Endothelial cell of umbilical vein (primary cell): ENCODE measurements at regions of chr2 and their contacts with region 1.

Region 1: GRCh38 chr2:33433279-33434235 is 42.9 kb upstream of the RASGRP3 start:
- DNase-seq: peak; percentile 70
- H3K4me3 ChIP-seq: no peak overlapping the region
- H3K27ac ChIP-seq: no peak overlapping the region
- H3K4me1 ChIP-seq: peaks cover 19% of the 10 kb centered on the region
- H3K27me3 ChIP-seq: peaks cover 0 to 4% of the 10 kb centered on the region in 2 experiments
- CTCF ChIP-seq: no peak
- POLR2A ChIP-seq: no peak

Region 2: DNA sequence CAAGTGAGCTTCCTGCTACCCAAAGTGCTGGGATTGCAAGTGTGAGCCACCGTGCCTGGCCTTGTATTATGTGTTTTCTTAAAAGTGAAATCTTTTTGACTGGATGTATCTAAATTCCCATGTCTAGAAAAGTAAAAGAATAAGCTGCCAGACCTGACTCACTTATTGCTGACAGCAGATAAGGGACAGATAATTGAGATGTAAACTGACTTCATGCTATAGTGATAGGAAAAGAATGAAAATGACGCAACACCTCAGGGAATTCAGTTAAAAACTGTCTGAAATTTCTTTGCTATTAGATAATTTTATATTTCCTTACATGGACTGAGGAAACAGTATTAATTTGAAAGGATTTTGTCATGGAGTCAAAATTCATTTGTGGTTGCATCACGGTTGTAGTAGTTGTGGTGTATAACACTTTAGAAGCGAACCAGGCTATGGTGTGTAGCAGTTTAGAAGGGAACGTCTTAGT is 786.3 kb before region 1 on chr2:
- CTCF ChIA-PET with region 1: no interaction called
- POLR2A ChIA-PET with region 1: no interaction called
- dilution Hi-C with region 1: no loop called
- intact Hi-C with region 1: no loop called
- DNase-seq: no peak
- H3K4me3 ChIP-seq: no peak overlapping the region
- H3K27ac ChIP-seq: no peak overlapping the region
- H3K4me1 ChIP-seq: no peaks in the 10 kb centered on the region
- H3K27me3 ChIP-seq: no peaks in the 10 kb centered on the region
- CTCF ChIP-seq: no peak
- POLR2A ChIP-seq: no peak

Region 3: DNA sequence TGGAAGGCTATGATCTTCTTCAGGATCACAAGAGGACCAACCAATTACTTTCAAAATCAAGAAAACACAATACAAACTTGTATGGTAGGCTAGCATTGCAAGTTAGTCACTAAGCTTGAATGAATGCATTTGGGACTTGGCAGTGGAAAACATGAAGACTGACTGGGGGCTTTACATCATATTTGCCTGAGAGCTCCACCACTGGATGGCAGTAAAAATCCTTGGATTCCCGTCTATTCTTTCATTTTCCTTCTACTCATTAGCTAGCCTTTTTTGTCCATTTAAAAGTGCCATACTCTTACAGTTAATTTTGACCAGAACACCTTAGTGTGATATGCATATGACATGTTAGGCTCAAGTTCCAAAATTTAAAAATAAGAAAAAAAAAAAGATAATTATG is 20.6 kb before region 1 on chr2:
- CTCF ChIA-PET with region 1: interaction called, 24 read pairs
- POLR2A ChIA-PET with region 1: no interaction called
- dilution Hi-C with region 1: no loop called
- intact Hi-C with region 1: no loop called
- DNase-seq: peak; percentile 82
- H3K4me3 ChIP-seq: no peak overlapping the region
- H3K27ac ChIP-seq: no peak overlapping the region
- H3K4me1 ChIP-seq: peaks cover 11% of the 10 kb centered on the region
- H3K27me3 ChIP-seq: no peaks in the 10 kb centered on the region
- CTCF ChIP-seq: peak; percentile 41 to 57
- POLR2A ChIP-seq: no peak